ENCODE measurements at regions of chr2 and their contacts with region 1.

Region 1: DNA sequence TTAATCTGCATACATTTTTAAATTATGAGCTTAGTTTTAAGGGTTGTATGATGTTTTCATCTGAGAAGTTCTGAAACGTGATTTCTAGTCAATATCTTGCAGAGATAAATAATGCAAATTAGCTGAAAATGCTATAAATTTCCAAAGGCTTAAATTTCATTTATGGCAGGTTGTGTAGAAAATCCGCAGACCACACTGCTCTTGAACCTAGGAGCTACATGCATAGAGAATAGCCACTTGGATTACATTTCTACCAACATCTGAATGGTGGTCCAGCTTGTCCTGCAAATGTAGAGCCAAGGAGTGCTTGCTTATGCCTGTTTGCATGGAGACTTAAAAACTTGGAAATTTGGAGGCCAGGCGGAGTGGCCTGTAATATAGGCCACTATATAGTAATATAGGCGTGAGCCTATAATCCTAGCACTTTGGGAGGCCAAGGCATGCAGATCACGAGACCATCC is 6.8 kb downstream of the MAT2A start:
- H3K4me3 ChIP-seq: no peak overlapping the region
- H3K27ac ChIP-seq: no peak overlapping the region
- H3K4me1 ChIP-seq: no peaks in the 10 kb centered on the region
- CTCF ChIP-seq: no peak

Region 2: GRCh38 chr2:85577386-85578242 is 31.8 kb after region 1 on chr2 and contains the start of gene VAMP8:
- CTCF ChIA-PET with region 1: no interaction called
- POLR2A ChIA-PET with region 1: interaction called, 12 read pairs
- H3K4me3 ChIP-seq: peak within 1 kb of the TSS; percentile 55
- H3K27ac ChIP-seq: peak within 1 kb of the TSS; percentile 56
- H3K4me1 ChIP-seq: peaks cover 14% of the 10 kb centered on the region
- CTCF ChIP-seq: no peak